Right lobe of liver (tissue), 6 donors: ENCODE measurements at regions of chr10 and their contacts with region 1.

Region 1: GRCh38 chr10:71700731-71701368 is 18.7 kb downstream of the C10orf105 start:
- DNase-seq: no peak
- ATAC-seq: no peak
- H3K4me3 ChIP-seq: no peak overlapping the region
- H3K27ac ChIP-seq: no peak overlapping the region
- H3K4me1 ChIP-seq: no peaks in the 10 kb centered on the region
- H3K27me3 ChIP-seq: no peaks in the 10 kb centered on the region
- CTCF ChIP-seq: no peak
- POLR2A ChIP-seq: no peak

Region 2: DNA sequence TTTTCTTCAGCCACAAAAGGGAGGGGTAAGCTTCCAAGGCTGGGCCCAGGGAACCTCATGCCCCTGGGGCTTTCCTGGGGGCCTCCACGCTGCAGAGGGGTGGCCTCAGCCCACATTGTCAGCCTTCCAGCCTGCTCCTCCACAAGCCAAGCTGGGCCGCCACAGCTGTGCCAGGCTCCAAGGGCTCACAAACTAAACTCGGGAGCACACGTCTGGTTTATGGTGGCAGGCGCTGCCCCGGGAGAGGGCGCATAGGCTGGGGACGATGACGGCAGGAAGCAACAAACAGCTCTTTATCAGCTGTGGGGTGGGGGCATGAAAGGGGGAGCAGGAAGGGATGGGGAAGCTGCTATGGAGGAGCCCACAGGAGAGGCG is 310.4 kb before region 1 on chr10:
- intact Hi-C with region 1: loop called (anchors 5 to 10 kb)
- DNase-seq: peak in 1 of 3 donors; percentile 38
- ATAC-seq: no peak
- H3K4me3 ChIP-seq: no peak overlapping the region
- H3K27ac ChIP-seq: no peak overlapping the region
- H3K4me1 ChIP-seq: no peaks in the 10 kb centered on the region
- H3K27me3 ChIP-seq: no peaks in the 10 kb centered on the region
- CTCF ChIP-seq: no peak
- POLR2A ChIP-seq: no peak